Cardiac septum (tissue), 1 donor: ENCODE measurements at regions of chr6 and their contacts with region 1.

Region 1: DNA sequence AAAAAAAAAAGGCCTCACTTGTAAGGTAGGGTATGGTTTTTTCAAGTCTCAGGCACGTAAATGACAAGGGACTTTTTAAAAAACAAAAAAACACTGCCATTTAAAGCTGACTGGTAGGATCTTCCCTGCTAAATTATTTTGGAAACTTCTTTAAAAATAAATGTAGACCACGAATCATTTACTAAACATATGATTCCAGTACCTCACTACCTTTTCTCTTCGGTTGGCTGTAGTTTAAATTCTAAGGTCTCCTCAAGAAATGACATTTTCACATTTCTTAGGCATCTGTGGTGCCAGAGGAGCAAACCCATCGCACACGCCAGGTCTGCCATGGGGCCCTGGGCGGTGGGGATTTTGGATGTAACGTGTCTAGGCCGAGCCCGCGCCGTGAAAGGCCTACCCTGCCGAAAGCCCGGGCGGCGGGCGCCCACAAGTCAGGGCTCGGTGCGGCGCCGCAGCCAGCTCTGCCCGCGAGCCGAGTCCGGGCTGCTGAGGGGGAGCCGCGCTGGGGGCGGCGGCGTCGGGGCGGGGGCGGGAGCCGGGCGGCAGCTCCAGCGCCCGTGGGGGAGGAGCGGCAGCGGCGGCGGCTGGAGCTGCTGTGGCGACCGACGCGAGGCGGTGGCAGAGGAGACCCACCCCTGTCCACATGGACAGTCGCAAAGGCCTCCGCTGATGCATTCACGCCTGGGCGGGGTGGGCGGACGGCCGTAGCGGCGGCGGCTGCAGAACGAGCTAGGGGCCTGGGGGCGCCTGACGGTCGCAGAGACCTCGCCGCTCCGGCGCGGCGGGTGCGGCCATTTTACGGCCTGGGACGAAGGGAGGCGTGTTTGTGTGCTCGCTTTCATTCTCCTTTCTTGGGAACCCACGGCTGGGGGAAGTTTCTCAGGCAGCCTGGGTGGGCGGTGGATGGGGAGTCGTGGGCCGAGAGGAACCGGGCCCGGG is at the start of gene SENP6:
- DNase-seq: peak; percentile 92
- total RNA-seq, gene SENP6: 68.0 TPM

Region 2: GRCh38 chr6:75284632-75285286 is 316.8 kb before region 1 on chr6 and contains the start of gene TMEM30A:
- intact Hi-C with region 1: loop called (anchors 5 kb)
- DNase-seq: peak; percentile 98
- total RNA-seq, gene TMEM30A: 57.4 TPM

Region 3: DNA sequence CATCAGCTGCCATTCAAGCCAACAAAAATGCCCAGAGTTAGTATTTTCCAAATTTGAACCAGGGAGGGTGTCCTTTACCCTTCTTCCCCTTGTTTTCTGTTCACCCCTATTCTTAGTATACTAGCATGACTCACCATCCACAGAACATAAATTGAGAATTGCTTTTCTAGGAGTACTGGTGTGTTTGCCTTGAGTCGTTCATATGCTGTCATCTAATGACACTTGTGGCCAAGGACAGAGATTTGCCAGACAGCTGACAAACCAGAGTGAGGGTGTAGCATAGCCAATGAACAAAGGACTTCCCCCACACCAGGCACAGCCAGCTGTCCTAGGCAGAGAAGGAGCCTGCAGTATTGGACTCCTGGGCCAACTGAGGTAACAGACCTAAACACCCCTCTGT is 170.2 kb before region 1 on chr6:
- intact Hi-C with region 1: no loop called
- DNase-seq: peak; percentile 76

Region 4: DNA sequence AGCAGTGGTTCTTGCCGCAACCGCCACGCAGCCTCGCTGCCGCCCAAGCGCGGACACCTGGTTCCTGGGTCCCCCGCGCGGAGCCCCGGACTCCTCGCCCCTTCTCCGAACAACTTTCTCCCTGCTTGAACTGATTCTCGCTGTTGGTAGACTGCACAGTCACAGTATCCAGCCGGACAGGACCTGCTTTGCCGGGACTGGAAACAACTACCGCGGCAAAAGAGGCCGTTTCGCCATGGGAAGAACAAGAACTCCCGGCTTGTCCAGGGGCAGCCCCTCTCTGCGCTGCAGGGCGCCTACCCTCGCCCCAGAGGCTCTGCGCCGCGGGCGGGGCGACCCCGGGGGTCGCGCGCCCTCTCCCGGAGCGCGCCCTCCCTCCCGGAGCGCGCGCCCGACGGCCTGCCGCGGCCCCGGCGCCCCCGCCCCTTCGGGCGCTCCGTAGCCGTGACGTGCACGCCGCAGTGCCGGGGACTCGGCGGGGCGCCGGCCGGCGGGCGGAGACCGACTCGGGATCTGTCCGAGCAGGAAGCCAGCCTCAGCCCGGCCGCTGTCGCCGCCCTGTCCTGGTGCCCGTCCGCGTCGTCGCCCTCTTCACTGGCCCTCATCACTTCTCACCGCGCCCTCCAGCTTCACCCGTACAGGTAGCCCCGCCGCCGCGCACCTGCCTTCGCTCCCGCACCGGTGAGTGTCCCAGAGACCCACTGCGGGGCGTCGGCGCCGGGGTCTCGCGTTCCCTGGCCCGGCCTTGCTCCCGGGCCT is 147.3 kb after region 1 on chr6 and contains the start of gene MYO6:
- intact Hi-C with region 1: loop called (anchors 5 kb)
- DNase-seq: peak; percentile 84
- total RNA-seq, gene MYO6: 7.0 TPM